ENCODE measurements at regions of chr11 and their contacts with region 1.

Region 1: GRCh38 chr11:76799066-76799804 is 16.1 kb downstream of the TSKU start:
- DNase-seq: peak; percentile 60 to 80 (median 76)
- ATAC-seq: peak; percentile 93
- H3K4me3 ChIP-seq: peak overlapping the region; percentile 21
- H3K4me3 Mint-ChIP-seq: peak overlapping the region; percentile 16 to 66 (median 56)
- H3K27ac ChIP-seq: no peak overlapping the region
- H3K27ac Mint-ChIP-seq: peak overlapping the region in 3 of 9 donors; percentile 9 to 54 (median 24)
- H3K4me1 ChIP-seq: peaks cover 0 to 13% of the 10 kb centered on the region in 2 donors
- H3K4me1 Mint-ChIP-seq: peaks cover 4 to 20% (median 17%) of the 10 kb centered on the region in 7 donors
- H3K27me3 ChIP-seq: no peaks in the 10 kb centered on the region
- H3K27me3 Mint-ChIP-seq: peaks cover 4 to 19% (median 8%) of the 10 kb centered on the region in 5 donors

Region 2: GRCh38 chr11:76577199-76577920 is 221.9 kb before region 1 on chr11:
- CTCF ChIA-PET with region 1: no interaction called
- POLR2A ChIA-PET with region 1: no interaction called
- intact Hi-C with region 1: no loop called
- DNase-seq: no peak
- ATAC-seq: no peak
- H3K4me3 ChIP-seq: no peak overlapping the region
- H3K4me3 Mint-ChIP-seq: no peak overlapping the region
- H3K27ac ChIP-seq: no peak overlapping the region
- H3K27ac Mint-ChIP-seq: no peak overlapping the region
- H3K4me1 ChIP-seq: no peaks in the 10 kb centered on the region
- H3K4me1 Mint-ChIP-seq: peaks cover 0 to 12% (median 0%) of the 10 kb centered on the region in 7 donors
- H3K27me3 ChIP-seq: no peaks in the 10 kb centered on the region
- H3K27me3 Mint-ChIP-seq: peaks cover 0 to 20% (median 14%) of the 10 kb centered on the region in 5 donors

Region 3: DNA sequence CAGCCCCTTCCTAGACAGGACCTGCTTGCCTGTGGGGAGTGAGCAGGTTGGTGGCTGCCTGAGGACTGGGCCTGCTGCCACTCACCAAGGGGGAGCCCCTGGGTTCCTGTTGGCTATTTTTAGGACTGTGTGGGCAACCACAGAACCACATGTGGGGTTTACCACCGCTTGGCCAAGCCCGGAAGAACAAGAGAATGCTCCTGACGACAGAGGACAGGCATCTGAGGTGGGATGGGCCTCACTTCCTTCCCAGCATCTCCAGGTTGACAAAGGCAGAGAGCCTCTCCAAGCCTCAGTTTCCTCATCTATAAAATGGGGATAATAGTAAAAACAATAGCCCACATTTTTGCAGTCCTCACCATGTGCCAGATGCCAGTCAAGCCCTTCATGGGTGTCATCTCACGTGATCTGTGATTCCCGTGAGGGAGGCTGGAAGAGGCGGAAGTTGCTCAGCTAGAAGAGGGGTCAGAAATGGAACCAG is 172.3 kb before region 1 on chr11:
- CTCF ChIA-PET with region 1: no interaction called
- POLR2A ChIA-PET with region 1: no interaction called
- intact Hi-C with region 1: no loop called
- DNase-seq: peak in 2 of 9 donors; percentile 24 to 76
- ATAC-seq: peak; percentile 60
- H3K4me3 ChIP-seq: no peak overlapping the region
- H3K4me3 Mint-ChIP-seq: peak overlapping the region in 1 of 10 donors; percentile 60
- H3K27ac ChIP-seq: no peak overlapping the region
- H3K27ac Mint-ChIP-seq: peak overlapping the region in 2 of 9 donors; percentile 7 to 79
- H3K4me1 ChIP-seq: peaks cover 0 to 7% of the 10 kb centered on the region in 2 donors
- H3K4me1 Mint-ChIP-seq: peaks cover 5 to 46% (median 12%) of the 10 kb centered on the region in 7 donors
- H3K27me3 ChIP-seq: no peaks in the 10 kb centered on the region
- H3K27me3 Mint-ChIP-seq: peaks cover 0 to 14% (median 6%) of the 10 kb centered on the region in 5 donors

Region 4: GRCh38 chr11:76721755-76722677 is 77.2 kb before region 1 on chr11:
- CTCF ChIA-PET with region 1: interaction called, 7 read pairs
- POLR2A ChIA-PET with region 1: no interaction called
- intact Hi-C with region 1: loop called in 1 of 2 experiments (anchors 1 kb)
- DNase-seq: peak; percentile 32 to 77 (median 58)
- ATAC-seq: peak; percentile 92
- H3K4me3 ChIP-seq: no peak overlapping the region
- H3K4me3 Mint-ChIP-seq: peak overlapping the region in 6 of 10 donors; percentile 11 to 66 (median 46)
- H3K27ac ChIP-seq: no peak overlapping the region
- H3K27ac Mint-ChIP-seq: peak overlapping the region in 1 of 9 donors; percentile 47
- H3K4me1 ChIP-seq: no peaks in the 10 kb centered on the region
- H3K4me1 Mint-ChIP-seq: peaks cover 5 to 11% (median 9%) of the 10 kb centered on the region in 7 donors
- H3K27me3 ChIP-seq: no peaks in the 10 kb centered on the region
- H3K27me3 Mint-ChIP-seq: peaks cover 14 to 37% (median 20%) of the 10 kb centered on the region in 5 donors

Region 5: GRCh38 chr11:76734456-76735420 is 64.5 kb before region 1 on chr11:
- CTCF ChIA-PET with region 1: interaction called, 19 read pairs
- POLR2A ChIA-PET with region 1: interaction called, 3 read pairs
- intact Hi-C with region 1: loop called (anchors 1 kb)
- DNase-seq: no peak
- ATAC-seq: no peak
- H3K4me3 ChIP-seq: no peak overlapping the region
- H3K4me3 Mint-ChIP-seq: no peak overlapping the region
- H3K27ac ChIP-seq: no peak overlapping the region
- H3K27ac Mint-ChIP-seq: no peak overlapping the region
- H3K4me1 ChIP-seq: no peaks in the 10 kb centered on the region
- H3K4me1 Mint-ChIP-seq: peaks cover 0 to 3% (median 0%) of the 10 kb centered on the region in 7 donors
- H3K27me3 ChIP-seq: no peaks in the 10 kb centered on the region
- H3K27me3 Mint-ChIP-seq: peaks cover 0 to 8% (median 0%) of the 10 kb centered on the region in 5 donors

Region 6: GRCh38 chr11:76782526-76783293 is 16.5 kb before region 1 on chr11:
- CTCF ChIA-PET with region 1: interaction called, 3 read pairs
- POLR2A ChIA-PET with region 1: no interaction called
- intact Hi-C with region 1: loop called in 1 of 2 experiments (anchors 1 kb)
- DNase-seq: peak in 2 of 9 donors; percentile 7 to 64
- ATAC-seq: peak; percentile 44
- H3K4me3 ChIP-seq: peak overlapping the region; percentile 37
- H3K4me3 Mint-ChIP-seq: peak overlapping the region; percentile 66 to 93 (median 82)
- H3K27ac ChIP-seq: no peak overlapping the region
- H3K27ac Mint-ChIP-seq: peak overlapping the region in 1 of 9 donors; percentile 85
- H3K4me1 ChIP-seq: peaks cover 0 to 4% of the 10 kb centered on the region in 2 donors
- H3K4me1 Mint-ChIP-seq: peaks cover 4 to 16% (median 8%) of the 10 kb centered on the region in 7 donors
- H3K27me3 ChIP-seq: peaks cover 4 to 8% of the 10 kb centered on the region in 2 donors
- H3K27me3 Mint-ChIP-seq: peaks cover 46 to 70% (median 51%) of the 10 kb centered on the region in 5 donors

Region 7: GRCh38 chr11:76835928-76836612 is 36.8 kb after region 1 on chr11:
- CTCF ChIA-PET with region 1: no interaction called
- POLR2A ChIA-PET with region 1: no interaction called
- intact Hi-C with region 1: no loop called
- DNase-seq: no peak
- ATAC-seq: no peak
- H3K4me3 ChIP-seq: no peak overlapping the region
- H3K4me3 Mint-ChIP-seq: no peak overlapping the region
- H3K27ac ChIP-seq: no peak overlapping the region
- H3K27ac Mint-ChIP-seq: no peak overlapping the region
- H3K4me1 ChIP-seq: no peaks in the 10 kb centered on the region
- H3K4me1 Mint-ChIP-seq: no peaks in the 10 kb centered on the region
- H3K27me3 ChIP-seq: no peaks in the 10 kb centered on the region
- H3K27me3 Mint-ChIP-seq: peaks cover 0 to 25% (median 22%) of the 10 kb centered on the region in 5 donors

Measured in naive thymus-derived CD4-positive, alpha-beta T cell (primary cell).